ENCODE measurements at regions of chr1 and their contacts with region 1.

Region 1: GRCh38 chr1:78839704-78840277 is 166.7 kb downstream of the ADGRL4 start:
- DNase-seq: no peak
- H3K4me3 ChIP-seq: no peak overlapping the region
- H3K27me3 ChIP-seq: no peaks in the 10 kb centered on the region
- CTCF ChIP-seq: peak; percentile 58

Region 2: DNA sequence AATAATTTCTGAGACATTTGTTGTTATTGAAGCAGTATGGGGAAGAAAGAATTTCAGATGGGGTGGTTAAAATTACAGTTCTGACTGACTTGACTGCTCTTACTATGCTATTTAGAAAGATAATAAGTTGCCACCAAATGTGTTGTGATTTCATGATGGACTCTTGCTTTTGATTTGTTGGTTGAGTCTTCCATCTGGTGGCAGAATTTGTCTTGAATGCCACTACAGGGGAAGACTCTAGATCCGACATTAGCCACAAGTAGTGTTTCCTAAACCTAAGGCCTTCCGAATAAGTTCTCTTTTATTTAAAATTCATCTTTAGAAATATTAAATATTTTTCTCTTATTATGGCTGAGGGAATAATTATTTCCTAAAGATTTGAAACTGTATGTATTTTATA is 357.6 kb after region 1 on chr1:
- CTCF ChIA-PET with region 1: interaction called, 27 read pairs
- POLR2A ChIA-PET with region 1: no interaction called
- DNase-seq: no peak
- H3K4me3 ChIP-seq: no peak overlapping the region
- H3K27me3 ChIP-seq: no peaks in the 10 kb centered on the region
- CTCF ChIP-seq: no peak